Activated CD8-positive, alpha-beta T cell treated with anti-CD3 and anti-CD28 coated beads for 36 hours (primary cell): ENCODE measurements at regions of chr4 and their contacts with region 1.

Region 1: GRCh38 chr4:24551492-24552289 is 32.7 kb downstream of the DHX15 start:
- DNase-seq: no peak
- ATAC-seq: no peak
- H3K4me3 Mint-ChIP-seq: no peak overlapping the region
- H3K27ac Mint-ChIP-seq: no peak overlapping the region
- H3K4me1 Mint-ChIP-seq: peaks cover 46% of the 10 kb centered on the region
- H3K27me3 Mint-ChIP-seq: no peaks in the 10 kb centered on the region
- CTCF ChIP-seq: peak; percentile 56

Region 2: GRCh38 chr4:24382381-24382780 is 169.3 kb before region 1 on chr4:
- CTCF ChIA-PET with region 1: no interaction called
- POLR2A ChIA-PET with region 1: no interaction called
- intact Hi-C with region 1: no loop called
- DNase-seq: no peak
- ATAC-seq: peak; percentile 60
- H3K4me3 Mint-ChIP-seq: no peak overlapping the region
- H3K27ac Mint-ChIP-seq: no peak overlapping the region
- H3K4me1 Mint-ChIP-seq: no peaks in the 10 kb centered on the region
- H3K27me3 Mint-ChIP-seq: peaks cover 12% of the 10 kb centered on the region
- CTCF ChIP-seq: no peak

Region 3: GRCh38 chr4:24419181-24420034 is 132.3 kb before region 1 on chr4:
- CTCF ChIA-PET with region 1: no interaction called
- POLR2A ChIA-PET with region 1: no interaction called
- intact Hi-C with region 1: no loop called
- DNase-seq: peak; percentile 74
- ATAC-seq: peak; percentile 53
- H3K4me3 Mint-ChIP-seq: no peak overlapping the region
- H3K27ac Mint-ChIP-seq: no peak overlapping the region
- H3K4me1 Mint-ChIP-seq: no peaks in the 10 kb centered on the region
- H3K27me3 Mint-ChIP-seq: peaks cover 5% of the 10 kb centered on the region
- CTCF ChIP-seq: peak; percentile 82

Region 4: DNA sequence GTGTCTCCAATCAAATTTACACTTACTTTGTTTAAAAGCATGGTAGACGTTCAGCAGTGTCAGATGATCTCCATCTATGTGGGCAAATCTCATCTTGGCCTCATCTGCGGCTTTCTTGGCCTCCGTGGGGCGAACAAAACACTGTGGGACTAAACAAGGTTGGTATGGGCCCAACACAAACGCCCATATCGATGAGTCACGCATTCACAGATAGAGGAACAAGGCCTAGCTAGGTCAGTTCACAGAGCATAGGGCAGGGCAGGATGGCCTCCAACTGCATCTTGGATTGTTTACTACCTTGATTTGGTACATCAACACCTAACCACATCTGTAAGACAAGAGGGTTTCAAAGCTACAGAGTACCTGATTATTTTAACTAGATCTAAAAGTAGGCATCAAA is 14.7 kb before region 1 on chr4:
- CTCF ChIA-PET with region 1: interaction called, 23 read pairs
- POLR2A ChIA-PET with region 1: interaction called, 3 read pairs
- intact Hi-C with region 1: no loop called
- DNase-seq: no peak
- ATAC-seq: no peak
- H3K4me3 Mint-ChIP-seq: no peak overlapping the region
- H3K27ac Mint-ChIP-seq: no peak overlapping the region
- H3K4me1 Mint-ChIP-seq: peaks cover 16% of the 10 kb centered on the region
- H3K27me3 Mint-ChIP-seq: no peaks in the 10 kb centered on the region
- CTCF ChIP-seq: no peak

Region 5: DNA sequence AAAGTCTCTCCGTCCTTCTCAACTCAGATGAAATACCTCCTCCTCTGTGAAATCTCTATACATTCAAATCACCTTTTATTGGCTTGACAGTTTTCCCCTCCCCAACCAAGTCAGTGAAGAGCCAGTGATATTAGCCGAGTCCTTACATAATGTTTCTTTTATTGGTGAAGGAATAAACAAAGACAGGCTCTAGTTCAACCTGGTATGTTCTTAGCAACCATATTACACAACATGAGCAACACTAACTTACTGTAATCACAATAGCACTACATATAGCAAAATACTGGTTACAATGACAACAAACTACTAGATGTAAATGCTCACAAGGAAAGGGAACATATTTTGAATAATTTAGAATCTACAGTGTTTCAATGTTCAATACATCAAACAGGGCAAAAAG is 12.8 kb after region 1 on chr4:
- CTCF ChIA-PET with region 1: interaction called, 12 read pairs
- POLR2A ChIA-PET with region 1: interaction called, 11 read pairs
- intact Hi-C with region 1: no loop called
- DNase-seq: no peak
- ATAC-seq: no peak
- H3K4me3 Mint-ChIP-seq: no peak overlapping the region
- H3K27ac Mint-ChIP-seq: no peak overlapping the region
- H3K4me1 Mint-ChIP-seq: peaks cover 69% of the 10 kb centered on the region
- H3K27me3 Mint-ChIP-seq: no peaks in the 10 kb centered on the region
- CTCF ChIP-seq: no peak

Region 6: DNA sequence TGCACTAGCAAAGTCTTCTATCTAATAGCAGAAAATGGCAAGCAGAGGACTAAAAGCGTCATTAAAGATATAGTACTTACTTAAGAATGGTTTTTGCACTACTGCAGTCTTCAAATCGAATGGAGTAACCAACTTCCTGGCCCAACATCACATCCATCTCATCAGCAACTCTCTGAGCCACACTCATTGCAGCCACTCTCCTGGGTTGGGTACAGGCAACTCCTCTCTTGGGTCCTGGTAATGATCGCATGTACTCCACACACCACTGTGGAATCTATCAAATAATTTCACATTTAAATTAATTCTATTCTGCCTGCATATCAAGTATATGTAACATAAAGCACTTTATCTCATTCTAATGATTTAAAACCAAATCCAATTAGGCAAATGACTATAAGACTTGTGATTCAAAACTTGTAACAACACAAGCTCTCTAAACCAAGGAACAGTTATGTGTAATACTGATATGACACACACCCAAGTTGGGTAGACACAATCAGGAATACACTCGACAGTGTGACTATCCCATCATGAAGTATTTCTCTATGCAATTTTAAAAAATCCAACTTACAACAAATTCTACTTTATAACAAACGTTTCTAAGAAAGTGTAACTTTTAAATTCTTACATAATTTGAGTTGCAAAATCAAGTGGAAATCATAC is 19.0 kb after region 1 on chr4:
- CTCF ChIA-PET with region 1: interaction called, 12 read pairs
- POLR2A ChIA-PET with region 1: interaction called, 6 read pairs
- intact Hi-C with region 1: no loop called
- DNase-seq: no peak
- ATAC-seq: no peak
- H3K4me3 Mint-ChIP-seq: no peak overlapping the region
- H3K27ac Mint-ChIP-seq: no peak overlapping the region
- H3K4me1 Mint-ChIP-seq: peaks cover 71% of the 10 kb centered on the region
- H3K27me3 Mint-ChIP-seq: no peaks in the 10 kb centered on the region
- CTCF ChIP-seq: no peak